HEK293 (cell line): ENCODE measurements at regions of chr17 and their contacts with region 1.

Region 1: DNA sequence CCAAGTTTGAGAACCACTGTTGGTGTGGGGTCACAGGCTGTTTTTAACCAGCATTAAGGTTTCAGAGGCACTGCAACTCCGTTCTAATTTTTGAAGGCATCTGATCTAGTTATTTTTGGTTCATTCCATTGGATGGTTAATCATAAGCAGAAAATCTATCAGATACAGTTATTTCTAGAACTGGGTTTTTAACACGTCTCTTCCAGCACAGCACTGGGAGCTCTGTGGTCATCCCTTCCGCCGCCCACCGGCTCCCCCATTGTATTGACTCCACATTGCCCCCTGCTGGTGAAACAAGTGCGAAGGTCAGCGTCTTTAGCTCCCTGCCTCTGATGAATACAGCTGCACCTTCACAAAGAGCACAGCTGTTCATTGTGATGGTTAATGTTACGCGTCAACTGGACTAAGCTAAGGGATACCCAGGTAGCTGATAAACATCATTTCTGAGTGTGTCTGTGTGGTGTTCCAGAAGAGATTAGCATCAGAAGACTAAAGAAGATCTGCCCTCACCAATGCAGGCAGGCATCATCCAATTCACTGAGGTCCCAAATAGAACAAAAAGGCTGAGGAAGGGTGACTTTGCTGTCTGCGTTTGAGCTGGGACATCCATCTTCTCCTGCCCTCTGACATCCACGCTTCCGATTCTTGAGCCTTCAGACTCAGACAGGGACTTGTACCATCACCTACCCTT is 8.5 kb downstream of the CCL18 start:
- H3K4me3 ChIP-seq: no peak overlapping the region
- H3K27ac ChIP-seq: no peak overlapping the region
- H3K4me1 ChIP-seq: no peaks in the 10 kb centered on the region
- CTCF ChIP-seq: peak; percentile 53; the same call in 1 of the 2 replicates

Region 2: GRCh38 chr17:35900708-35901480 is 171.7 kb before region 1 on chr17:
- CTCF ChIA-PET with region 1: no interaction called
- POLR2A ChIA-PET with region 1: no interaction called
- H3K4me3 ChIP-seq: no peak overlapping the region
- H3K27ac ChIP-seq: peak overlapping the region; percentile 36
- H3K4me1 ChIP-seq: peaks cover 9% of the 10 kb centered on the region
- CTCF ChIP-seq: no peak

Region 3: GRCh38 chr17:35981908-35982330 is 90.7 kb before region 1 on chr17:
- CTCF ChIA-PET with region 1: interaction called, 50 read pairs
- POLR2A ChIA-PET with region 1: no interaction called
- H3K4me3 ChIP-seq: no peak overlapping the region
- H3K27ac ChIP-seq: no peak overlapping the region
- H3K4me1 ChIP-seq: no peaks in the 10 kb centered on the region
- CTCF ChIP-seq: no peak

Region 4: GRCh38 chr17:36048066-36048465 is 24.5 kb before region 1 on chr17:
- CTCF ChIA-PET with region 1: interaction called, 14 read pairs
- POLR2A ChIA-PET with region 1: no interaction called
- H3K4me3 ChIP-seq: no peak overlapping the region
- H3K27ac ChIP-seq: no peak overlapping the region
- H3K4me1 ChIP-seq: no peaks in the 10 kb centered on the region
- CTCF ChIP-seq: no peak

Region 5: DNA sequence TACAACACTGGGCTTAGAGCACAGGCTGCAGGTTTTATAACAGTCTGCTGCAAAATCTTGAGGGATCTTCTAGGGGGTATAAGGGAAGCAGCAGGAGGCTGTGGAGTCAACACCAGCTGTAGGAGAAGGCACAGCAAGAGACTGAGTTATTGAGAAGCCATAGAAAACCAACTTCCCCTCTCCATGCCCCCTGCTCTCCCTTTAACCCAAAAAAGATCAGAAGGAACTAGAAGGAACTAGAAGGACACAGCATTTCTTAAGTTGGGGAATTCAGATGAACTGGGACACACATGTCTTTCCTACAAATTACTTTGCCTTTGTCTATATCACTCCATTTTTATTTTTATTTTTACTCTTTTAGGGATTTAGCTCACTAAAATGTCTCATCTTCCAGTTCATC is 14.7 kb before region 1 on chr17:
- CTCF ChIA-PET with region 1: interaction called, 42 read pairs
- POLR2A ChIA-PET with region 1: no interaction called
- H3K4me3 ChIP-seq: no peak overlapping the region
- H3K27ac ChIP-seq: no peak overlapping the region
- H3K4me1 ChIP-seq: no peaks in the 10 kb centered on the region
- CTCF ChIP-seq: no peak

Region 6: DNA sequence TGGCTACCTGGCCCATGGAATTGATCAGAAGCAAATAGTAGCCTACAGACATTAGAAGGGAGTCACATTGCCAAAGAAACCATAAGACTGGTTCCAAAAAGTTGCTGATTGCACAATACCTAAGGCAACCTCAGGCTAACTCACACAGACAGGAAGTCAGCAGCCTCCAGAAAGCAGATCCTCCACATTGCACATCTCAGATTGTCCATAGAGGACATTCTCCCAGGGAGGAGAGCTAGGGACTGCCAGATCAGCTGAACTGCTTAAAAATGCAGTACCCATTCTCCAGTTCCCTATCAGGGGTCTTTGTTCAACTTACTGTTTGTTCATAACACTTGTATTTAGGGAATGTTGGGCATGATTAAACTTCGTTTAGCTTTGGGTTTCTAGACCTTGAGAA is 13.2 kb after region 1 on chr17:
- CTCF ChIA-PET with region 1: interaction called, 13 read pairs
- POLR2A ChIA-PET with region 1: no interaction called
- H3K4me3 ChIP-seq: no peak overlapping the region
- H3K27ac ChIP-seq: no peak overlapping the region
- H3K4me1 ChIP-seq: no peaks in the 10 kb centered on the region
- CTCF ChIP-seq: no peak

Region 7: GRCh38 chr17:36117505-36118382 is 45.2 kb after region 1 on chr17:
- CTCF ChIA-PET with region 1: interaction called, 19 read pairs
- POLR2A ChIA-PET with region 1: no interaction called
- H3K4me3 ChIP-seq: no peak overlapping the region
- H3K27ac ChIP-seq: no peak overlapping the region; the same call in 1 of the 2 replicates
- H3K4me1 ChIP-seq: peaks cover 3% of the 10 kb centered on the region; the same call in 1 of the 2 replicates
- CTCF ChIP-seq: no peak

Region 8: GRCh38 chr17:36124879-36125824 is 52.6 kb after region 1 on chr17:
- CTCF ChIA-PET with region 1: interaction called, 19 read pairs
- POLR2A ChIA-PET with region 1: no interaction called
- H3K4me3 ChIP-seq: no peak overlapping the region
- H3K27ac ChIP-seq: no peak overlapping the region
- H3K4me1 ChIP-seq: no peaks in the 10 kb centered on the region
- CTCF ChIP-seq: no peak

Region 9: GRCh38 chr17:36183001-36183971 is 110.7 kb after region 1 on chr17:
- CTCF ChIA-PET with region 1: no interaction called
- POLR2A ChIA-PET with region 1: no interaction called
- H3K4me3 ChIP-seq: peak overlapping the region; percentile 31
- H3K27ac ChIP-seq: 0 out of 2 replicates have a peak overlapping the region, but pooled peaks have one; percentile 9
- H3K4me1 ChIP-seq: no peaks in the 10 kb centered on the region
- CTCF ChIP-seq: no peak

Region 10: DNA sequence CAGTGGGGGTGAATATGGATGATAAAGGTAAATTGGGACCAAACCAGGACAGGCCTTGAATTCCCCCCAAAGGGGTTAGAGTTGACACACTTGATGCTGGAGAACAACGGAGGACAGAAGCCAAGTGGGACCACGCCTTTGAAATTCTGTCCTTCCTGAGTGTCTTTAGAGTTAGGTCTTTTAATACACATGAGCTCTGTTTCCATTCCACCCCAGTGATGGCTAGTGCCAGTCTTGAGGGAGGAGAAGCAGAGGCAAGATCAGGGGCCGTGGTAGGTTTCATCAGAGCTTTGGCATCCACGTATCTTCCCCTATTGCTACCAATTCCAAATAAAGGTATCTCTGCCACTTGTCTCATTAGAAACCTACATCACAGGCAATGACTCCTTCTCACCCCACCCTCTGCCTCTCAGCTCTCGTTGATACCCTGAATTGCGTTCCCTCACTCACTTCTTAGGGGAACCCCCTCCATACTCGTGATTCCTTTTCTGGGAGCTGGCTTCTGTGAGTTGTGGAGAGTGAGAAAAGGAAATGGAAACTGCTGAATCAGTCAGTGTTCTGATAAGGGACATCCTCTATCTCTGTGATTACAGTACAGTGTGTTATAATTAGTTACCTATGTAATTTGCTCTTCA is 126.4 kb after region 1 on chr17:
- CTCF ChIA-PET with region 1: no interaction called
- POLR2A ChIA-PET with region 1: no interaction called
- H3K4me3 ChIP-seq: no peak overlapping the region
- H3K27ac ChIP-seq: no peak overlapping the region
- H3K4me1 ChIP-seq: no peaks in the 10 kb centered on the region
- CTCF ChIP-seq: no peak